Cardiac septum (tissue), 1 donor: ENCODE measurements at regions of chr15 and their contacts with region 1.

Region 1: GRCh38 chr15:48645558-48646330 is at the start of gene FBN1:
- DNase-seq: peak; percentile 82
- total RNA-seq, gene FBN1: 32.1 TPM

Region 2: DNA sequence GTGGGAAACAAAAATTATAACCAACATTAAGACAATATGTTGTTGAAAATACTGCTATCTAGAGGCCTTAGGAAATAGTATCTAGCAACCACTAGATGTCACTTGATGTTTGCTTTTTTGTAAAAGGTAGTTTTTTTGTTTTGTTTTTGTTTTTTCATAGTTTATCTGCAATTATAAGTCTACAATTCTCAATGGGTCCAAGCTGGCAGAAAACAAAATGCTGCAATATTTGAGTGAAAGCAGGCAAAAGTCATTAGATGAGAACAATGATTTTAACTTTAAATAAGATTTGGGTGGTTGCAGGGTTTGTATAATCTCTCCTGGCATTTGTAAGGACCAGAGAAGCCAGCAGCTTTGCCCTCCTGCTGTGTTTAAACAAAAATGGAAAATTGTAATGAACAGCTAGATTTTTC is 287.5 kb before region 1 on chr15:
- intact Hi-C with region 1: loop called (anchors 5 kb)
- DNase-seq: no peak

Region 3: GRCh38 chr15:48507416-48508065 is 138.2 kb before region 1 on chr15:
- intact Hi-C with region 1: loop called (anchors 10 kb)
- DNase-seq: no peak

Region 4: DNA sequence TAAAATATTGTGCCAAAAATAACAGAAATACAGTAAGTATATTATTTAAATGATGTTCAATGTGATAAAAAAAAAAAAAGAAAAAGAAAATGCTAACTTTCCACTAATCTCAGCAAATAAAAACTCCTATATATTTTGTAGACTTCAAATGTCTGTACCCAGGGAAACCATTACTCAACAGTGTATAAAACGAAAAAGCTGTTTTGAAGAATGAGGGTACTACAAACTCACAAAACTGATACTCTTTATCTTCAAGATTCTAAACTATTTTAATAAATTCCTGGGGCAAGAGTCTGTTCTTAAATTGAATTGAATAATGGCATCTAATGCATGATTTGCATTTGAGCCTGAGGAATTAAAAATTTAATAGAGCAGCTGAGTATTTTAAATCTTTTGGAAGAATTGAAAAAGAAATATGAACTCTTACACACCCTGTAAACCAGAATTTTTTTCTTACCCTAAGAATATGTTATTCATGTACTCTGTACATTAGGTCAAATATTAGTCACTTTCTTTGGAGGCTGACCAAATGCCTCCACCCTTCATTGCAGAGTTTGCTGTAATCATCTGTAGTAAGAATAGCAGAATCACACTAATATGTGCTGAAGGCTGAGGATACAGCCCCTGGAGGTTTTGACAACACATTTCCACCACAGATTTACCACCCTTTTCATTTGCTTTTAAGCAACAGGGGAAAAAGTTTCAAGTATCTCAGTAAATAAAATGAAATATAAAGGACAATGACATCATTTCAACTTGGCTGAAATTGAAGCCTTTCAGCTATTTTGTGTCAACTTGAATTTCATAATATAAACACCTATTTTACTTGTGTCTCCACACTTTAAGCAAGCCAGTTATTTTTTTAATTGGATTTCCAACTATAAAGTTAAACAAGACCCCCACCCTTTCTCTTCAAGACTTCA is 79.9 kb before region 1 on chr15:
- intact Hi-C with region 1: loop called (anchors 10 kb)
- DNase-seq: no peak

Region 5: GRCh38 chr15:48794697-48795134 is 149.0 kb after region 1 on chr15:
- intact Hi-C with region 1: loop called (anchors 5 kb)
- DNase-seq: no peak